ENCODE measurements at regions of chr1 and their contacts with region 1.

Region 1: DNA sequence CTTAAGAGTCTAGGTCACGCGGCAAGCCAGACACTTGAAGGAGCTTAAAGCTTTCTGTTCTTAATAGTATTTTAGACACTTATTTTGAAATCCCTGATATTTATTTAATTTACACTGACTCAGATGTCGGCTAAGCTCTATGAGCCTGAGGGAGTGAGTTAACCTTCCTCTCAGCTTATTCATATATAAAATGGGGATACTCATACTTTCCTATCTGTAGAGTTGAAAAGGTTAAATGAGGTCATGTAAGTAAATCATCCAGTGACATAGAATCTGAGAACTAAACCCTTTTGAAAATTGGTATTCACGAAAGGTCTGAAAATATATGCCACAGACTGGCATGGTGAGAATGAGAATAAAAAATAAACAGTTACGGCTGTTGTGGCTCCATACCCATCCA is 1.4 kb upstream of the GPR161 start:
- DNase-seq: no peak
- H3K4me3 Mint-ChIP-seq: no peak overlapping the region
- H3K27ac Mint-ChIP-seq: peak overlapping the region; percentile 14
- H3K4me1 Mint-ChIP-seq: peaks cover 43% of the 10 kb centered on the region
- H3K27me3 Mint-ChIP-seq: peaks cover 27% of the 10 kb centered on the region

Region 2: DNA sequence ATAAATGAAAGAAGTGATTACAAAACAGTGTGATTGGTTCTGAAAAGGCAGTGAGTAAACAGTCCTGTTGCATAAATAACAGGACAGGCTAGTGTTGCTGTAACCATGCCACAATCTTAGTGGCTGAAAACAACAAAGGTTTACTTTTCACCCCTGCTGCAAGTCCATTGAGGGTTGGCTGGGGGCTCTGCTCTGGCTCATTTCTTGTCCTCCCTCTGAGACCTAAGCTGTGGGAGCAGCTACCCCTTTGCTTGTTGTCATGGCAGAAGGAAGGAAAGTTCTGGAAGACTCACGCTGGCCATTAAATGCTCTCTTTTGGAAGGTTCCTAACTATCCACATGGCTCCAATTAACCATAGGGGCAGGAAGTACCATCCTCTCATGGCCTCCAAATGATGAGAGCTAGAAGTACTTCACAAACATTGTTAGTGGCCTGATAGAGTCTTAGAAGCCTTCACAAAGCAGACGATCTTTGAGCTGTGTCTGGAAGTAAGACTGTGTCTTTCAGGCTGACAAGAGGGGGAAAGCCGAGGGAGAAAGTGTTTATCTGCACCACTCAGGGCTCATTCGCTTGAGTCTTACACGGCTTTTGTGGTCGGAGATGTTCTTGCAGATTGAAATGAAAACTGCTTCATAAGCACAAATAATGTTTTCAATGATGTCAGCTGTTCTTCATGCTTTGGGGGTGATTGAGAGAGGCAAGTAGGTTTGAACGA is 496.2 kb before region 1 on chr1:
- CTCF ChIA-PET with region 1: no interaction called
- POLR2A ChIA-PET with region 1: no interaction called
- intact Hi-C with region 1: no loop called
- DNase-seq: peak; percentile 20
- H3K4me3 Mint-ChIP-seq: peak overlapping the region; percentile 0
- H3K27ac Mint-ChIP-seq: peak overlapping the region; percentile 85
- H3K4me1 Mint-ChIP-seq: peaks cover 84% of the 10 kb centered on the region
- H3K27me3 Mint-ChIP-seq: no peaks in the 10 kb centered on the region

Region 3: DNA sequence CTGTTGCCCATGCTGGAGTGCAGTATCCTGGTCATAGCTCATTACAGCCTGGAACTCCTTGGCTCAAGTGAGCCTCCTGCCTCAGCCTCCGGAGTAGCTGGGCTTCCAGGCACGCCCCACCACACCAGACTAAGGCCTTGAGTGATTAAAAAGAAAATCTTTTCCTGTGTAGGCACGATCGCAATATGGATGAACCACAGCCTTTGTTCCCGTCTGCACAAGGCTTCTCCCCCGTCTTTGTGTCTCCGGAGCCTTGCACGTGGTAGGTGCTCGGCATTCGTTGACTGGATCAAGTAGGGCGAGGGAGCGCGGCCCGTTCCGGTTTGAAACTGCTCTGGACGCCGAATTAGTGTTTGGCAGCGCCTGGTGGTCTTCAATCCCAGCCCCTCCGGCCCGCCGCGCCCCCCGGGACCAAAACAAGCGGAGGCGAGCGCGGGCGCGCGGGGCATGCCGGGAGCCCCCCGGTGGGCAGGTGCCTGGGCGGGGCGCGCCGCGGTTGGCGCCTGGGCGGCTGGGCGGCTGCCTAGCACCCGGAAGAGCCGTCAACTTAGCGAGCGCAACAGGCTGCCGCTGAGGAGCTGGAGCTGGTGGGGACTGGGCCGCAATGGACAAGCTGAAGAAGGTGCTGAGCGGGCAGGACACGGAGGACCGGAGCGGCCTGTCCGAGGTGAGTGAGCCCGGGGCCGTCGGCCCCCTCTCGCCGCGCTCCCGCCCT is 87.5 kb after region 1 on chr1 and contains the start of gene SFT2D2:
- CTCF ChIA-PET with region 1: no interaction called
- POLR2A ChIA-PET with region 1: interaction called, 3 read pairs
- intact Hi-C with region 1: loop called (anchors 2 kb)
- DNase-seq: peak; percentile 83
- H3K4me3 Mint-ChIP-seq: peak within 1 kb of the TSS; percentile 91
- H3K27ac Mint-ChIP-seq: peak within 1 kb of the TSS; percentile 84
- H3K4me1 Mint-ChIP-seq: peaks cover 43% of the 10 kb centered on the region
- H3K27me3 Mint-ChIP-seq: peaks cover 7% of the 10 kb centered on the region
- total RNA-seq, gene SFT2D2: 52.3 to 52.9 TPM

Measured in activated CD4-positive, alpha-beta memory T cell treated with anti-CD3 and anti-CD28 coated beads for 36 hours (primary cell).